ENCODE measurements at regions of chr19 and their contacts with region 1.

Region 1: GRCh38 chr19:17605761-17606745 is 50.6 kb downstream of the COLGALT1 start:
- DNase-seq: peak; percentile 29 to 81
- H3K4me3 ChIP-seq: peak overlapping the region; percentile 40 to 59
- H3K27ac ChIP-seq: peak overlapping the region in 1 of 2 donors; percentile 14
- H3K4me1 ChIP-seq: peaks cover 0 to 3% of the 10 kb centered on the region in 2 donors
- H3K27me3 ChIP-seq: no peaks in the 10 kb centered on the region
- CTCF ChIP-seq: peak; percentile 60 to 80 (median 69)

Region 2: DNA sequence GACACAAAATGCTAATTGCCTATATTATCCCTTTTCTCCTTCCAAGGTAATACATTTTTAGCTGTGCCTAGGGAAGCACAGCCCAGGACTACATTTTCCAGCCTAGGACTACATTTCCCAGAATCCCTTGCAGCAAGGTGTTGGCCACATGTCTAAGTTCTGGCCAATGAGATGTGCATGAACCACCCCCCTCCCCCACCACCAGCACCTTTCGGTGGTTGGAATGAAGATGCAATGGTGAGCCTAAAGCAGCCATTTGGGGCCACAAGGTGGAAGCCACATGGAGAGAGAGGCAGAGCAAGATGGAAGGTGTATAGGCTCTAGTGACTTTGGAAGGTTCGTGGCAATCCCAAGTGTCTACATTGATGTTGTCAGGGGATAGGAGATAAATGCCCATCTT is 65.9 kb after region 1 on chr19:
- intact Hi-C with region 1: loop called (anchors 5 kb)
- DNase-seq: no peak
- H3K4me3 ChIP-seq: no peak overlapping the region
- H3K27ac ChIP-seq: no peak overlapping the region
- H3K4me1 ChIP-seq: no peaks in the 10 kb centered on the region
- H3K27me3 ChIP-seq: no peaks in the 10 kb centered on the region
- CTCF ChIP-seq: no peak

Region 3: GRCh38 chr19:17687857-17688784 is 82.1 kb after region 1 on chr19 and contains the start of gene UNC13A:
- intact Hi-C with region 1: loop called (anchors 5 kb)
- DNase-seq: no peak
- H3K4me3 ChIP-seq: peak within 1 kb of the TSS; percentile 42 to 55
- H3K27ac ChIP-seq: peak within 1 kb of the TSS; percentile 4 to 11
- H3K4me1 ChIP-seq: peaks cover 0 to 13% of the 10 kb centered on the region in 2 donors
- H3K27me3 ChIP-seq: peaks cover 3% of the 10 kb centered on the region
- CTCF ChIP-seq: no peak
- total RNA-seq, gene UNC13A: 2.2 TPM

Region 4: GRCh38 chr19:17766543-17767131 is 160.6 kb after region 1 on chr19:
- intact Hi-C with region 1: loop called (anchors 2 kb)
- DNase-seq: peak in 1 of 2 donors; percentile 86
- H3K4me3 ChIP-seq: peak overlapping the region in 1 of 2 donors; percentile 26
- H3K27ac ChIP-seq: no peak overlapping the region
- H3K4me1 ChIP-seq: no peaks in the 10 kb centered on the region
- H3K27me3 ChIP-seq: no peaks in the 10 kb centered on the region
- CTCF ChIP-seq: peak; percentile 66 to 72 (median 69)